ENCODE measurements at regions of chr14 and their contacts with region 1.

Region 1: GRCh38 chr14:61456720-61457119 is 135.3 kb downstream of the PRKCH start:
- DNase-seq: peak; percentile 66 to 92 (median 81)
- ATAC-seq: peak; percentile 55
- H3K4me3 ChIP-seq: no peak overlapping the region
- H3K4me3 Mint-ChIP-seq: peak overlapping the region; percentile 71
- H3K27ac ChIP-seq: no peak overlapping the region
- H3K27ac Mint-ChIP-seq: peak overlapping the region; percentile 91
- H3K4me1 ChIP-seq: peaks cover 66% of the 10 kb centered on the region
- H3K4me1 Mint-ChIP-seq: peaks cover 92% of the 10 kb centered on the region
- H3K27me3 ChIP-seq: no peaks in the 10 kb centered on the region
- H3K27me3 Mint-ChIP-seq: no peaks in the 10 kb centered on the region
- CTCF ChIP-seq: peak; percentile 90

Region 2: DNA sequence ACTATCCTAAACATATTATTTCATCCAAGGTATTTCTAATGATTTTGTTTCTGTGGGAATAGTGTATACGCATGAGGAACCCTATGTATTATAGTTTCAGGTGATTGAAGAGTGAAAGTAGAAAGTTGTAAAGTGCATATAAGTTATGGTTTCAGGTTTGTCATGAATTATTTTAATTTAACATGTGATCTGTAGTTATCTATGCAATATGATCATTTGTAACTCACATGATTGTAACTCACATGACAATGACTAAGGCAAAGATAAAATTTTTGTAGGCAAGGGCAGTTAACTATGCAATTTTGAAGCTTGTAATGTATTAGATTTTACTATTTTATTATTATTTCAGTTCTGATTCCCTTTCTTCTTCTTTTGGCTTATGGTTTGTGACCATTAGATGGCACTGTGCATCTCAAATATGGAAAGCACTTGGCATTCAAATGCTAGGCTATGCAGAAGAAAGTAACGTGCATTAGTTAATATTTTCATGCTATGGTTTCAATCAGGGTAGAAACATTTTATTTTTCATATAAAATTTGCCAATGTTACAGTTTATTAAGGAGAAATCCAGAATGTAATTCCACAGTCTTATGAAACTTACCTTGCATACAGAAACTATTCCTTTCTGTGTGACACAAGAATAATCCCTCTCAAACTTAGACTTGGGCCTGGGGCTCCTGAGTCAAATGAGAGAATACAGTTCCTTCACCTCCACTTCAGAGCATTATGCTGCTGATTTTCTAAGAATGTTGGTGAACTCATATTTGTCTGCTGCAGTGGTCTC is 159.8 kb before region 1 on chr14:
- CTCF ChIA-PET with region 1: interaction called, 4 read pairs
- POLR2A ChIA-PET with region 1: interaction called, 6 read pairs
- intact Hi-C with region 1: loop called (anchors 2 kb)
- DNase-seq: peak in 4 of 14 experiments; percentile 23 to 80 (median 75)
- ATAC-seq: peak; percentile 76
- H3K4me3 ChIP-seq: no peak overlapping the region
- H3K4me3 Mint-ChIP-seq: no peak overlapping the region
- H3K27ac ChIP-seq: no peak overlapping the region
- H3K27ac Mint-ChIP-seq: no peak overlapping the region
- H3K4me1 ChIP-seq: peaks cover 18% of the 10 kb centered on the region
- H3K4me1 Mint-ChIP-seq: peaks cover 56% of the 10 kb centered on the region
- H3K27me3 ChIP-seq: no peaks in the 10 kb centered on the region
- H3K27me3 Mint-ChIP-seq: no peaks in the 10 kb centered on the region
- CTCF ChIP-seq: peak; percentile 77

Region 3: DNA sequence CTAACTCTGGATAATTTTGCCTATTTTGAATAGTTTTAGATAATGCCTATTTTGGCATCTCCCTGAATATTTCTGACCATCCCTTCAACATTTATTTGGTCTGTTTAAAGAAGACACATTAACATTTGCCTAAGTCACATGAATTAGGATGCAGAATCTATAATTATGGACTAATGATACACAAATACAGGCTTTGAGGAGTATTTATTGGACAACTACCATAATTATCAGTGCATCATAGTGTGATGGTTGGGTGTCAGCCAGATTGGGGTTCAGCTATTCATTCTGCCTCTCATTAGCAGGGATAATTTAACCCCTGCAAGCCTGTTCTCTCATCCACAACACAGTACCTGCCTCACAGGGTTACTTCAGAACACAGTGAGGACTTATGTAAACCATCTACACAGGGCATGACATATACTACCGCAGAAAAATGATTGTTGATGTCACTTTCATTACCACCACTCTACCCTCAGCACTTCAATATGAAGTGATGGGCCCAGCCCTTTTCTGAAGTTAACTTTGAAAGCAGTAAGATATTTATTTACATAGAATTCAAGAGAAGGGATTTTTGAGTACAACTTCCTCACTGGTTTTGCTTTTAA is 120.9 kb before region 1 on chr14:
- CTCF ChIA-PET with region 1: no interaction called
- POLR2A ChIA-PET with region 1: interaction called, 21 read pairs
- intact Hi-C with region 1: loop called in 1 of 2 experiments (anchors 2 kb)
- DNase-seq: peak in 5 of 14 experiments; percentile 42 to 83 (median 78)
- ATAC-seq: peak; percentile 62
- H3K4me3 ChIP-seq: peak overlapping the region; percentile 6
- H3K4me3 Mint-ChIP-seq: peak overlapping the region; percentile 87
- H3K27ac ChIP-seq: peak overlapping the region; percentile 85 to 98
- H3K27ac Mint-ChIP-seq: peak overlapping the region; percentile 99
- H3K4me1 ChIP-seq: peaks cover 78% of the 10 kb centered on the region
- H3K4me1 Mint-ChIP-seq: peaks cover 82% of the 10 kb centered on the region
- H3K27me3 ChIP-seq: no peaks in the 10 kb centered on the region
- H3K27me3 Mint-ChIP-seq: no peaks in the 10 kb centered on the region
- CTCF ChIP-seq: no peak

Region 4: DNA sequence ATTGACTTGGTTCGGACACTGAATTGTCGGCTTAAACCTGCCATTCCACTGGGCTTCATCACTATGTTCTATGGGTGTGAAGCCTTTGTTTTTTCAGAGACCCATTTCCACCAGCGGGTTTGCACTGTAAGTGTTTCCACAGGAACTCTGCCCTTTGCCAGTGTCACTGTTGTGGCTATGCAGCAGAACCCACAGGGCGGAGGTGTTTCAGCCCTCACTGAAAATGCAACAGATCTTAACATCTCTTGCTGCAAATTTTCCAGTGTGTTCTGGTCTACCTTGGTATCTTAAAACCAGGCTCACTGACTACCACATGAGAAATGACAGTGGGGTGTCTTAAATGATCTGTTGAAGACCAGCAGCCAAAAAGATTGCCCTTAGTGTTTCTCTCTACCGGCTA is 114.2 kb before region 1 on chr14:
- CTCF ChIA-PET with region 1: no interaction called
- POLR2A ChIA-PET with region 1: interaction called, 14 read pairs
- intact Hi-C with region 1: loop called in 1 of 2 experiments (anchors 2 kb)
- DNase-seq: peak; percentile 60 to 93 (median 76)
- ATAC-seq: peak; percentile 57
- H3K4me3 ChIP-seq: peak overlapping the region; percentile 23
- H3K4me3 Mint-ChIP-seq: peak overlapping the region; percentile 87
- H3K27ac ChIP-seq: peak overlapping the region; percentile 79 to 88
- H3K27ac Mint-ChIP-seq: peak overlapping the region; percentile 99
- H3K4me1 ChIP-seq: peaks cover 90% of the 10 kb centered on the region
- H3K4me1 Mint-ChIP-seq: peaks cover 92% of the 10 kb centered on the region
- H3K27me3 ChIP-seq: no peaks in the 10 kb centered on the region
- H3K27me3 Mint-ChIP-seq: no peaks in the 10 kb centered on the region
- CTCF ChIP-seq: no peak

Region 5: GRCh38 chr14:61403411-61403810 is 53.3 kb before region 1 on chr14:
- CTCF ChIA-PET with region 1: interaction called, 3 read pairs
- POLR2A ChIA-PET with region 1: interaction called, 13 read pairs
- intact Hi-C with region 1: loop called in 1 of 2 experiments (anchors 5 kb)
- DNase-seq: peak in 5 of 14 experiments; percentile 14 to 80 (median 71)
- ATAC-seq: peak; percentile 80
- H3K4me3 ChIP-seq: peak overlapping the region; percentile 9
- H3K4me3 Mint-ChIP-seq: peak overlapping the region; percentile 84
- H3K27ac ChIP-seq: peak overlapping the region; percentile 23 to 77
- H3K27ac Mint-ChIP-seq: peak overlapping the region; percentile 80
- H3K4me1 ChIP-seq: peaks cover 63% of the 10 kb centered on the region
- H3K4me1 Mint-ChIP-seq: peaks cover 92% of the 10 kb centered on the region
- H3K27me3 ChIP-seq: no peaks in the 10 kb centered on the region
- H3K27me3 Mint-ChIP-seq: no peaks in the 10 kb centered on the region
- CTCF ChIP-seq: no peak

Region 6: DNA sequence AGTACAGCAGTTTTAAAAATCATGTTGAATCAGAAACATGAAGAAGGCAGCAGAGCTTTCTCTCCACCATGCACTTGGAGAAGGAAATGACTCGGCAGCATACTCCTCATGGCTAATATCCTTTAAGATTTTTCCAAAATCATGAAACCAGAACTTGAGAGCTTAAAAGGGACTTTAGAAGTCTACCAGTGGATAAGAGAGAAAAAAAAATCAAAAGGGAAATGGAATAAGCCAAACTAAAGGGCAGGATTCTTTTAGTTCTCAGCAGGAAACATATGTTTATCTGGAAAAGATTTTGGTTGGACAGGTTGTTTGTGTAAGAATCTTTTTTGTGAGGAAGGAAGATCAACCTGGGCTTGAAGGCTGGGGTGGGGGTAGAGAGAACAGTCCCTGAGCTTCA is 23.6 kb before region 1 on chr14:
- CTCF ChIA-PET with region 1: interaction called, 12 read pairs
- POLR2A ChIA-PET with region 1: interaction called, 5 read pairs
- intact Hi-C with region 1: no loop called
- DNase-seq: no peak
- ATAC-seq: no peak
- H3K4me3 ChIP-seq: no peak overlapping the region
- H3K4me3 Mint-ChIP-seq: peak overlapping the region; percentile 60
- H3K27ac ChIP-seq: peak overlapping the region in 1 of 2 donors; percentile 31
- H3K27ac Mint-ChIP-seq: peak overlapping the region; percentile 73
- H3K4me1 ChIP-seq: peaks cover 57% of the 10 kb centered on the region
- H3K4me1 Mint-ChIP-seq: peaks cover 94% of the 10 kb centered on the region
- H3K27me3 ChIP-seq: no peaks in the 10 kb centered on the region
- H3K27me3 Mint-ChIP-seq: no peaks in the 10 kb centered on the region
- CTCF ChIP-seq: no peak

Region 7: DNA sequence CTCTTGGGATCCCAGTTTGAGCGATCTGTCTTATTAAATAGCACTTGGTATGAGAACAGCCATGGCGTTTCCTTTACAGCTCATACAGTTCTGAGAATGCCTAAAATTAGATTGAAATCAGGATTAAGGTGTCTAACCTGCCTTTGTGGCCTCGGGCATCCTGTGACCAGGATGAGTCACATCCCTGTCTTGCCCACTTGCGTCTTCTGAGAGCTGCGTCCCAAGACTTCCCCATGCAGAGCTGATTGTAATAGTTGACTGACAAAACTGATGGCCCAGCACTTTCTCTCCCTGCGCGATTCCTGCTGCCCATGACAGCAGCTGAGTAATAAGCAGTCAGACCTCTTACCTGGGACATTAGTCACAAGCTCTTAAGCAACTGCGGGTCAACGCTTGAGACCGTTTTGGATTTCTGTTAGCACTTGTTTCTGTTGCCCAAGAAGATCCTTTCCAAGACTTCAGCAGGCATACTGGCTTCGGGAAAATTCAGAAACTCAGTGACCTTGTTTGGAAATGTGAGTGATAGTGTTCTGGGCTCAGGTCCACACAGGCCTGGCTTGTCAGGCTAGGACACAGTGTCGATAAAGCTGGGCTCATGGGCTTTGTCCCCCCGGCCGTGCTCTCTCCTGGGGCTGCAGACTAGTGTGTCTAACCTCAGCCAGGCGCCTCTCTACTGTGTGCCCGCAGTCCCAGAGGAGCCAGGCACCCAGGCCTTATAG is 68.7 kb after region 1 on chr14:
- CTCF ChIA-PET with region 1: no interaction called
- POLR2A ChIA-PET with region 1: no interaction called
- intact Hi-C with region 1: no loop called
- DNase-seq: peak in 13 of 14 experiments; percentile 23 to 83 (median 42)
- ATAC-seq: peak; percentile 67
- H3K4me3 ChIP-seq: no peak overlapping the region
- H3K4me3 Mint-ChIP-seq: peak overlapping the region; percentile 12
- H3K27ac ChIP-seq: peak overlapping the region; percentile 8 to 42
- H3K27ac Mint-ChIP-seq: peak overlapping the region; percentile 52
- H3K4me1 ChIP-seq: peaks cover 48% of the 10 kb centered on the region
- H3K4me1 Mint-ChIP-seq: peaks cover 82% of the 10 kb centered on the region
- H3K27me3 ChIP-seq: no peaks in the 10 kb centered on the region
- H3K27me3 Mint-ChIP-seq: no peaks in the 10 kb centered on the region
- CTCF ChIP-seq: no peak

Region 8: GRCh38 chr14:61837336-61838229 is 380.9 kb after region 1 on chr14:
- CTCF ChIA-PET with region 1: interaction called, 7 read pairs
- POLR2A ChIA-PET with region 1: interaction called, 3 read pairs
- intact Hi-C with region 1: loop called (anchors 1 kb)
- DNase-seq: peak; percentile 54 to 88 (median 68)
- ATAC-seq: peak; percentile 99
- H3K4me3 ChIP-seq: no peak overlapping the region
- H3K4me3 Mint-ChIP-seq: no peak overlapping the region
- H3K27ac ChIP-seq: no peak overlapping the region
- H3K27ac Mint-ChIP-seq: no peak overlapping the region
- H3K4me1 ChIP-seq: no peaks in the 10 kb centered on the region
- H3K4me1 Mint-ChIP-seq: no peaks in the 10 kb centered on the region
- H3K27me3 ChIP-seq: no peaks in the 10 kb centered on the region
- H3K27me3 Mint-ChIP-seq: peaks cover 6% of the 10 kb centered on the region
- CTCF ChIP-seq: peak; percentile 96